Mucosa of descending colon (tissue), 3 donors: ENCODE measurements at regions of chrX and their contacts with region 1.

Region 1: DNA sequence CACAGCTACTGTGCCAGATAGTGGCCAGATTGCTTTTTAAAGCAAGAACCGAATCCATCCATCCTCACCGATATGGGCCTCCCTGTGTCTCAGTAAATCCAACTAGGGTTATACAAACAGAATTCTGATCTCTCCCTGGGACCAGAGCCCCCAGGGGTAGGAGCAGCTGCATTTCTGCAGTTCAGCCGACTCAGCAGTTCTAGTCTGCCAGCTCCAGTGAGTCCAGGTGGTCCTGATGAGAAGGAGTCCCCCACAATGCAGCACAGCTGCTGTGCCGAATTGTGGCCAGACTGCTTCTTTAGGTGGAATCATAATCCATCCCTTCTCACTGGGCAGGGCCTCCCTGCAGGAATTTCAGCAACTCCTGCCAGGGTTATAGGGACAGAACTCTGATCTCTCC is 532.9 kb downstream of the ACTRT1 start:
- DNase-seq: peak in 1 of 3 donors; percentile 15
- ATAC-seq: no peak
- H3K4me3 ChIP-seq: no peak overlapping the region
- H3K4me1 ChIP-seq: no peaks in the 10 kb centered on the region
- CTCF ChIP-seq: no peak

Region 2: DNA sequence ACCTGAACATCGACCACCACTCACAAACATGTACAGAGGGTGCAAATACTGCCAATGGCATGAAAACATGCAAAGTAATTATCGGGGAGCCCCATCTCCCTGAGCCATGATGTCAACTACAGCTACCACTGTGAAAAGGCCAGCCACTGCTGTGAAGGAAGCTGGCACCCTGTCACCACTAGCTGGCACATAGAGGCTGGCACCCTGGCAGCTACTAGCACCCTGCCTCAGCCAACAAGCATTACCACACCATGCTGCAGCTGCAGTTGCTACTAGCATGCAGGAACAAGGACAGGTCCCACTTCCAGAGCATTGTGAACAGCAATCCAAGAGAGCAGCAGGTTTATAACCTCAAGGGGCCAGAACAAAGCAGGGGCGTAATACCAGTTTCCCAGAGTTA is 618.4 kb before region 1 on chrX:
- intact Hi-C with region 1: loop called in 1 of 2 experiments (anchors 10 kb)
- DNase-seq: no peak
- ATAC-seq: no peak
- H3K4me3 ChIP-seq: no peak overlapping the region
- H3K4me1 ChIP-seq: no peaks in the 10 kb centered on the region
- CTCF ChIP-seq: no peak